ENCODE measurements at regions of chr2 and their contacts with region 1.

Region 1: DNA sequence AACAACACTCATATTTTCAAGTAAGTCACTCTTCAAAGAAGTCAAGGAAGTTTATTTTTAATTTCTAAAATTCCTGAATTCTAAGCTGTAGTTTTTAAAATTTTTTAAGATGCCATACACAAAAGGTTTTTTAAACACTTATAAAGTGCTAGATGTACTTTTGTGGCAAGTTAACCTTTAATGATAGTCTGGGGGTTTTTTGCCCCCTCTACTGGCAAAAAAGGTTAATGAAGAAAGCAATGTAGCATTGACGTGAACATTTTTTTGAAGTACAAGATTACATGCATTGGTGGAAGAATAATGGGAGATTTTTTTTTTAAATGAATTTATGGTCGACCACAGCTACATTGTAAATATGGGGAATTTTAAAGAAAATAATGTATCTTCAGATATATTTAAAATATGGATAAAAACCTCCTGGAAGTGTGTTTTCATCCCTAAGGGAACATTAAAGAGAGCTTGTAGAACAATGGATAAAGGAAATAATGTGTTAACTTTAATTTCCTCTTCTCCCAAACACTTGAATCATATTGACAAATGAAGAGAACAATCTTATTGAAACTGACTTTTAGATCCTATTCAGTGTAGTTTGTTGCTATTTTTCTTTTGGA is 12.6 kb downstream of the ITPRID2 start:
- DNase-seq: peak in 2 of 9 experiments; percentile 50 to 62
- ATAC-seq: peak; percentile 64
- H3K4me3 ChIP-seq: no peak overlapping the region
- H3K4me3 Mint-ChIP-seq: no peak overlapping the region
- H3K27ac ChIP-seq: no peak overlapping the region
- H3K27ac Mint-ChIP-seq: no peak overlapping the region
- H3K4me1 ChIP-seq: peaks cover 4% of the 10 kb centered on the region
- H3K4me1 Mint-ChIP-seq: peaks cover 25% of the 10 kb centered on the region
- H3K27me3 ChIP-seq: no peaks in the 10 kb centered on the region
- H3K27me3 Mint-ChIP-seq: no peaks in the 10 kb centered on the region
- CTCF ChIP-seq: peak; percentile 77

Region 2: GRCh38 chr2:180125245-180125962 is 1778.7 kb before region 1 on chr2:
- CTCF ChIA-PET with region 1: interaction called, 5 read pairs
- POLR2A ChIA-PET with region 1: no interaction called
- intact Hi-C with region 1: loop called in 1 of 2 experiments (anchors 10 kb)
- DNase-seq: peak; percentile 3 to 72 (median 35)
- ATAC-seq: peak; percentile 75
- H3K4me3 ChIP-seq: no peak overlapping the region
- H3K4me3 Mint-ChIP-seq: no peak overlapping the region
- H3K27ac ChIP-seq: no peak overlapping the region
- H3K27ac Mint-ChIP-seq: no peak overlapping the region
- H3K4me1 ChIP-seq: no peaks in the 10 kb centered on the region
- H3K4me1 Mint-ChIP-seq: peaks cover 2% of the 10 kb centered on the region
- H3K27me3 ChIP-seq: no peaks in the 10 kb centered on the region
- H3K27me3 Mint-ChIP-seq: peaks cover 11% of the 10 kb centered on the region
- CTCF ChIP-seq: no peak

Region 3: GRCh38 chr2:181077128-181077709 is 826.9 kb before region 1 on chr2:
- CTCF ChIA-PET with region 1: interaction called, 4 read pairs
- POLR2A ChIA-PET with region 1: no interaction called
- intact Hi-C with region 1: loop called (anchors 1 to 2 kb)
- DNase-seq: peak in 3 of 9 experiments; percentile 8 to 82 (median 76)
- ATAC-seq: peak; percentile 94
- H3K4me3 ChIP-seq: no peak overlapping the region
- H3K4me3 Mint-ChIP-seq: no peak overlapping the region
- H3K27ac ChIP-seq: no peak overlapping the region
- H3K27ac Mint-ChIP-seq: no peak overlapping the region
- H3K4me1 ChIP-seq: no peaks in the 10 kb centered on the region
- H3K4me1 Mint-ChIP-seq: no peaks in the 10 kb centered on the region
- H3K27me3 ChIP-seq: no peaks in the 10 kb centered on the region
- H3K27me3 Mint-ChIP-seq: no peaks in the 10 kb centered on the region
- CTCF ChIP-seq: peak; percentile 90

Region 4: DNA sequence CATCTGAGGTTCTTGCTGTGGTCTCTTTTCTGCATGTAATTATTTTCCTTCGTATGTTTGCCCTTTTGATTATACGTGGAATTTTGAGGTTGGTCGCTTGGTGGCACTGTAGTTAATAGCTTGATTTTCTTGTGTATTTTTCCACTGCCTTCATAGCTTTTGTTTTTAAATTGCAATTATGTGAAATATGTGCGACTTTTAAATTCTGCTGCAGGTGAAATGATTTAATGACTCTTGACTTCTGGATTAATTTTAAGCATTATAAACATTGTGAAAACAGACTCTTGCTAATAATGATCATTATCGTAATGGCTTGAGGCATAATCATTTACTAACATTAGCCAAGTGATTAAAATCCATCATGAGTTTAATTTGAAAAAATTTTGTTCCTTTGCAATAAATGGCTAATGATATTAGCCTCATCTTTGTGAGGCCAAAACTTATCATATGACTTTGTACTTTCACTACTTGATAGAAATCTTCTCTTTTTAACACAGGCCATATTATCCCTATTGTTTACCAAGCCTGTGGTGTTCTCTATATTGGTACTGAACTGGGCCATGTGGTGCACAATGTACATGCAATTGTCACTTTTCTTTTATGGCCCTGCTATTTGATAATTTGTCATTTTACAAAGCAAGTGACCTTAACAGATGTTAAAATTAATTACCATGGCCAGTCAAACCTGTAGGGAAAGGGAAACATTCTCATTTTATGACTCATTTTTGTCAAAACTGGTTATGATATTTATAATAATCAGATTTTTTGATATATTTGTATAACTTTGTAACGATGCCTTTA is 161.0 kb before region 1 on chr2:
- CTCF ChIA-PET with region 1: interaction called, 27 read pairs
- POLR2A ChIA-PET with region 1: no interaction called
- intact Hi-C with region 1: loop called (anchors 1 kb)
- DNase-seq: peak in 6 of 9 experiments; percentile 6 to 60 (median 20)
- ATAC-seq: no peak
- H3K4me3 ChIP-seq: no peak overlapping the region
- H3K4me3 Mint-ChIP-seq: no peak overlapping the region
- H3K27ac ChIP-seq: no peak overlapping the region
- H3K27ac Mint-ChIP-seq: no peak overlapping the region
- H3K4me1 ChIP-seq: no peaks in the 10 kb centered on the region
- H3K4me1 Mint-ChIP-seq: no peaks in the 10 kb centered on the region
- H3K27me3 ChIP-seq: no peaks in the 10 kb centered on the region
- H3K27me3 Mint-ChIP-seq: peaks cover 4% of the 10 kb centered on the region
- CTCF ChIP-seq: peak; percentile 54

Region 5: GRCh38 chr2:181923123-181923522 is 19.0 kb after region 1 on chr2:
- CTCF ChIA-PET with region 1: interaction called, 10 read pairs
- POLR2A ChIA-PET with region 1: no interaction called
- intact Hi-C with region 1: no loop called
- DNase-seq: no peak
- ATAC-seq: no peak
- H3K4me3 ChIP-seq: no peak overlapping the region
- H3K4me3 Mint-ChIP-seq: no peak overlapping the region
- H3K27ac ChIP-seq: no peak overlapping the region
- H3K27ac Mint-ChIP-seq: no peak overlapping the region
- H3K4me1 ChIP-seq: no peaks in the 10 kb centered on the region
- H3K4me1 Mint-ChIP-seq: peaks cover 2% of the 10 kb centered on the region
- H3K27me3 ChIP-seq: no peaks in the 10 kb centered on the region
- H3K27me3 Mint-ChIP-seq: no peaks in the 10 kb centered on the region
- CTCF ChIP-seq: no peak

Measured in CD8-positive, alpha-beta T cell (primary cell).